ENCODE measurements at regions of chr9 and their contacts with region 1.

Region 1: DNA sequence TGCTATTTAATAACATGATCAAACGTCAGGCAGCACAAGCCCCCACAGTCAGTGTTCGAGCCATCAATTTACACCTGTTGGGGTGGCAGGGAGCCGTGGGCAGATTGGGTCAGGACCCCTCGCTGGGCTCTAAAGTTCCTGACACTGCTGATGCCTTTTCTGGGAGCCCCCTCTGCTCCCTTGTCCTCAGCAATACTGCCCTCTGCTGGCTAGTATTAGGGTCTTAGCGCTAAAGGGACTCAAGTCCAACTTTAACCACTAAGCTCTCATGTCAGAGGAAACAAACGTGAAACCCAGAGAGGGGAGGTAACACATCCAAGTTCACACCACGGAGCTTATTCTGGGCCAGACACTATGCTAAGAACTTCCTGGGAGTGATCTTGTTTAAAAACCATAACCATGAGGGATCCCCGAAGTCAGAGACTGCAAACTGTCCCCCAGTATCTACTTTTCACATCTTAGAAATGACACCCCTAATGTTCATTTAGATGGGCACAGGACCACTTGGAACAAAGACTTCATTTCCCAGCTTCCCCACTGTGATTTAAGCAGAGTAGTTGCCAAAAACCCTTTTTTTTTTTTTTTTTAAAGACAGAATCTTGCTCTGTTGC is 20.4 kb downstream of the ANKS6 start:
- DNase-seq: peak; percentile 30
- H3K4me3 Mint-ChIP-seq: no peak overlapping the region
- H3K27ac Mint-ChIP-seq: no peak overlapping the region
- H3K4me1 Mint-ChIP-seq: no peaks in the 10 kb centered on the region
- H3K27me3 Mint-ChIP-seq: no peaks in the 10 kb centered on the region

Region 2: GRCh38 chr9:98315551-98316060 is 460.3 kb before region 1 on chr9:
- CTCF ChIA-PET with region 1: interaction called, 39 read pairs
- POLR2A ChIA-PET with region 1: no interaction called
- intact Hi-C with region 1: loop called (anchors 1 kb)
- DNase-seq: peak; percentile 85
- H3K4me3 Mint-ChIP-seq: no peak overlapping the region
- H3K27ac Mint-ChIP-seq: no peak overlapping the region
- H3K4me1 Mint-ChIP-seq: no peaks in the 10 kb centered on the region
- H3K27me3 Mint-ChIP-seq: no peaks in the 10 kb centered on the region

Region 3: GRCh38 chr9:98536542-98537173 is 239.3 kb before region 1 on chr9:
- CTCF ChIA-PET with region 1: interaction called, 12 read pairs
- POLR2A ChIA-PET with region 1: no interaction called
- intact Hi-C with region 1: no loop called
- DNase-seq: peak; percentile 56
- H3K4me3 Mint-ChIP-seq: no peak overlapping the region
- H3K27ac Mint-ChIP-seq: no peak overlapping the region
- H3K4me1 Mint-ChIP-seq: no peaks in the 10 kb centered on the region
- H3K27me3 Mint-ChIP-seq: peaks cover 2% of the 10 kb centered on the region

Region 4: DNA sequence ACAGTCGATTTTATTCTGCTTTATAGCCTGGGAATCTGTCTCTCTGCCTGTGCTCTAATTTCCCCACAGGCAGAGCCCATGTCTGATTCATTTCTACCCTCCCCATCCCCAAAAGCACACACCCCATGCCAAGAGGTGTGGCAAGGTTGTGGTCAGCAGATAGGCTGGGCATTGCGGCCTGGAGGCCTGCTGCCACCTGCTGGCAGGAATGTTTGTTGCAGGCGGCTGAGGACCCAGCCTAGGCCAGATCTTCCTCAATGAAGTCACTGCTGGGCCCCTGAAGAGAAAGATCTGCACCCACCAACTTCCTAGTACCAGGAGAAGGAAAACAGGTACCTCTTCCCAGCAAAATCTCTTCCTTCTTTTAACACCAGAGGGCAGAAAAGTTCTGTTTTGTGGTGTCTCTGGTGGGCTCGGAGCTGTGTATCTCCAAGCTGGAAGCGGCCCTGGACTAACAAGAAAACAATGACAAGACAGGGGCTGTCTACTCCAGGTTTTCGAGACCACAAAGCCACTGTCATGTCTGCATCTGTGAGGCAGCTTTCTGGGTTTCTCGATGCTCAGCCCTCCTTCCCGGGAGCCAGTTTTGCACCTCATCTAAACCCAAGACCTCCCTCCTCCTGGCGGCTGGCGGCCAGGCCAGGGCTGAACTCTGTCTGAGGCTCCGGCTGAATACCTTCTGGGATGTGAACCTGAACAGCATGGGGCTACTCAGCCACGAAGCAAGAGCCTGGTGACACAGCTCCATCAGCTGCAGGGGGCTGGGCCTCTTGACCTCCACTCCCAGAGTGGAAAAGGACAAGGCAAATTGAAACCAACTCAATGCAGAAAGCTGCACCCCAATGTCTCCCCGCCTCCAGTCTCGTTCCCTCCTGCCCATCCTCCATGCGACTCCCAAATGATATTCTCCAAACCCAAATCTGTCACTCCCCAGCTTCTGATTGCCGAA is 15.5 kb after region 1 on chr9:
- CTCF ChIA-PET with region 1: interaction called, 25 read pairs
- POLR2A ChIA-PET with region 1: no interaction called
- intact Hi-C with region 1: no loop called
- DNase-seq: peak; percentile 77
- H3K4me3 Mint-ChIP-seq: no peak overlapping the region
- H3K27ac Mint-ChIP-seq: no peak overlapping the region
- H3K4me1 Mint-ChIP-seq: peaks cover 28% of the 10 kb centered on the region
- H3K27me3 Mint-ChIP-seq: no peaks in the 10 kb centered on the region